CD4-positive, alpha-beta T cell (primary cell): ENCODE measurements at regions of chr1 and their contacts with region 1.

Region 1: GRCh38 chr1:84143796-84144565 is at the start of gene PRKACB:
- DNase-seq: peak in 5 of 14 experiments; percentile 7 to 81 (median 76)
- ATAC-seq: peak; percentile 87
- H3K4me3 ChIP-seq: peak within 1 kb of the TSS; percentile 57
- H3K4me3 Mint-ChIP-seq: peak within 1 kb of the TSS; percentile 100
- H3K27ac ChIP-seq: peak within 1 kb of the TSS; percentile 49 to 63
- H3K27ac Mint-ChIP-seq: peak within 1 kb of the TSS; percentile 99
- H3K4me1 ChIP-seq: peaks cover 8% of the 10 kb centered on the region
- H3K4me1 Mint-ChIP-seq: peaks cover 63% of the 10 kb centered on the region
- H3K27me3 ChIP-seq: no peaks in the 10 kb centered on the region
- H3K27me3 Mint-ChIP-seq: no peaks in the 10 kb centered on the region
- CTCF ChIP-seq: no peak
- total RNA-seq, gene PRKACB: 49.7 to 52.4 TPM

Region 2: GRCh38 chr1:84077476-84078107 is 66.4 kb before region 1 on chr1:
- CTCF ChIA-PET with region 1: no interaction called
- POLR2A ChIA-PET with region 1: interaction called, 13 read pairs
- intact Hi-C with region 1: no loop called
- DNase-seq: peak; percentile 32 to 86 (median 60)
- ATAC-seq: peak; percentile 88
- H3K4me3 ChIP-seq: peak overlapping the region; percentile 74
- H3K4me3 Mint-ChIP-seq: peak overlapping the region; percentile 92
- H3K27ac ChIP-seq: no peak overlapping the region
- H3K27ac Mint-ChIP-seq: peak overlapping the region; percentile 63
- H3K4me1 ChIP-seq: peaks cover 11% of the 10 kb centered on the region
- H3K4me1 Mint-ChIP-seq: peaks cover 16% of the 10 kb centered on the region
- H3K27me3 ChIP-seq: no peaks in the 10 kb centered on the region
- H3K27me3 Mint-ChIP-seq: no peaks in the 10 kb centered on the region
- CTCF ChIP-seq: no peak

Region 3: DNA sequence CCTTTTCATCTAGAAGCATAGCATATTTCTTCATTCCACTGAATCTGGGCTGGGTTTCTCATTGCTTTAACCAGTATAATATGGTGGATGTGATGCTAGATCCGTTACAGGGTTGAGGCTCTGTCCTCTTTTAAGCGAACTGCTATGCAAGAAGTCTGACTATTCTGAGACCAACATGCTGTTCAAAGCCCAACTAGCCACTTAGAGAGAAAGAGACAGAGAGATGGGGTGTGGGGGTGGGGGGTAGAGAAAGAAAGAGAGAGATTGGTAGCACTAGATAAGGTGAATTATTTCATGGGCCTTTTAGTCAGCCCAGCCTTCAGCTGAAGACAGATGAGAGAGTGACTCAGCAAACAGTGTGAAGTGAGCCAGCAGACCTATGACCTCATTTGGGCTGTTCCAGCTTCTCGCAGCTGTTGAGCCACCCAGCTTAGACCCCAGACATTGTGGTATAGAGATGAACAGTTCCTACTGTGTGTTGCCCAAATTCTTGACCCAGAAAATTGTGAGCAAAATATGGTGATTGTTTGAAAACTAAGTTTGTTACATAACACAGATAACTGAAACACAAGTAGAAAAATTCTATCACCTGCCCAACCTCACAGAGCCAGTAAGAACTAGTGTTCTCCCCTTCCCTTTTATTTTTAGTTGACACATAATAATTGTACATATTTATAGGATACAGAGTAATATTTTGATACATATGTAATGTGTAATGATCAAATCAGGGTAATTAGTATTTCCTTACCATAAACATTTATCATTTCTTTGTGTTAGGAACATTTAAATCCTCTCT is 40.6 kb before region 1 on chr1:
- CTCF ChIA-PET with region 1: no interaction called
- POLR2A ChIA-PET with region 1: no interaction called
- intact Hi-C with region 1: no loop called
- DNase-seq: peak in 2 of 14 experiments; percentile 4 to 20
- ATAC-seq: no peak
- H3K4me3 ChIP-seq: no peak overlapping the region
- H3K4me3 Mint-ChIP-seq: no peak overlapping the region
- H3K27ac ChIP-seq: no peak overlapping the region
- H3K27ac Mint-ChIP-seq: no peak overlapping the region
- H3K4me1 ChIP-seq: no peaks in the 10 kb centered on the region
- H3K4me1 Mint-ChIP-seq: no peaks in the 10 kb centered on the region
- H3K27me3 ChIP-seq: no peaks in the 10 kb centered on the region
- H3K27me3 Mint-ChIP-seq: no peaks in the 10 kb centered on the region
- CTCF ChIP-seq: no peak

Region 4: DNA sequence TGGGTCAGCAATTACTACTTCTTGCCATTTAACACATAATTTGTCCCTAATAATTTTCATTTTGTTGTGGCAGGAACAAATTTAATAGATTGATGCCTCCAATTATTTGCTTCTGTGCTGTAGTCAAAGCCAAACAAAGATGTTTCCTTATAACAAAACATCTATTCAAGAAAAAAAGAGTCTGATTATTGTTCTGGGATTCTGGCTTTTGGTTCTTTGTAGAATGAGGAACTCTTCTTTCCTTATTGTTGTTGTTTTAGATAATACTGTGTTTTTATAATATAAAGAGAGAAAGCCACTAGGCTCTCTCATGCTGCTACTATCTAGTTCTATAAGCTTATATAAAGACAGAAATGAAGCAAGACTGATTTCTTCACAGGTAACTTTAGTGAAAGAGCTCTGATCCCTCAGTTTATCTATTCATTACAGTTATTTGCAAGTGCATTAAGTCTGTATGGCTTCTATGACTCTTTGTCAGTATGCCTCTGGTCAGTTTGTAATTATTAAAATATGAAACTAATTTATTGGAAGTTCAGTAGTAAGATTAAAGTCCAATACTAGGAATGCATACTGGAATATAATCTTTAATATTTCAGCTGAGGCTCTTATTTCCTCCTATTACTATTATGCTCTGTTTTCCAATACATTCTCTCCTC is 37.5 kb after region 1 on chr1:
- CTCF ChIA-PET with region 1: interaction called, 8 read pairs
- POLR2A ChIA-PET with region 1: interaction called, 3 read pairs
- intact Hi-C with region 1: loop called in 1 of 2 experiments (anchors 2 kb)
- DNase-seq: no peak
- ATAC-seq: no peak
- H3K4me3 ChIP-seq: no peak overlapping the region
- H3K4me3 Mint-ChIP-seq: no peak overlapping the region
- H3K27ac ChIP-seq: no peak overlapping the region
- H3K27ac Mint-ChIP-seq: peak overlapping the region; percentile 49
- H3K4me1 ChIP-seq: no peaks in the 10 kb centered on the region
- H3K4me1 Mint-ChIP-seq: peaks cover 40% of the 10 kb centered on the region
- H3K27me3 ChIP-seq: no peaks in the 10 kb centered on the region
- H3K27me3 Mint-ChIP-seq: no peaks in the 10 kb centered on the region
- CTCF ChIP-seq: no peak

Region 5: GRCh38 chr1:84387480-84388163 is 243.6 kb after region 1 on chr1:
- CTCF ChIA-PET with region 1: no interaction called
- POLR2A ChIA-PET with region 1: no interaction called
- intact Hi-C with region 1: loop called (anchors 2 to 5 kb)
- DNase-seq: peak in 1 of 14 experiments; percentile 10
- ATAC-seq: peak; percentile 29
- H3K4me3 ChIP-seq: no peak overlapping the region
- H3K4me3 Mint-ChIP-seq: no peak overlapping the region
- H3K27ac ChIP-seq: no peak overlapping the region
- H3K27ac Mint-ChIP-seq: no peak overlapping the region
- H3K4me1 ChIP-seq: no peaks in the 10 kb centered on the region
- H3K4me1 Mint-ChIP-seq: no peaks in the 10 kb centered on the region
- H3K27me3 ChIP-seq: no peaks in the 10 kb centered on the region
- H3K27me3 Mint-ChIP-seq: no peaks in the 10 kb centered on the region
- CTCF ChIP-seq: no peak

Region 6: DNA sequence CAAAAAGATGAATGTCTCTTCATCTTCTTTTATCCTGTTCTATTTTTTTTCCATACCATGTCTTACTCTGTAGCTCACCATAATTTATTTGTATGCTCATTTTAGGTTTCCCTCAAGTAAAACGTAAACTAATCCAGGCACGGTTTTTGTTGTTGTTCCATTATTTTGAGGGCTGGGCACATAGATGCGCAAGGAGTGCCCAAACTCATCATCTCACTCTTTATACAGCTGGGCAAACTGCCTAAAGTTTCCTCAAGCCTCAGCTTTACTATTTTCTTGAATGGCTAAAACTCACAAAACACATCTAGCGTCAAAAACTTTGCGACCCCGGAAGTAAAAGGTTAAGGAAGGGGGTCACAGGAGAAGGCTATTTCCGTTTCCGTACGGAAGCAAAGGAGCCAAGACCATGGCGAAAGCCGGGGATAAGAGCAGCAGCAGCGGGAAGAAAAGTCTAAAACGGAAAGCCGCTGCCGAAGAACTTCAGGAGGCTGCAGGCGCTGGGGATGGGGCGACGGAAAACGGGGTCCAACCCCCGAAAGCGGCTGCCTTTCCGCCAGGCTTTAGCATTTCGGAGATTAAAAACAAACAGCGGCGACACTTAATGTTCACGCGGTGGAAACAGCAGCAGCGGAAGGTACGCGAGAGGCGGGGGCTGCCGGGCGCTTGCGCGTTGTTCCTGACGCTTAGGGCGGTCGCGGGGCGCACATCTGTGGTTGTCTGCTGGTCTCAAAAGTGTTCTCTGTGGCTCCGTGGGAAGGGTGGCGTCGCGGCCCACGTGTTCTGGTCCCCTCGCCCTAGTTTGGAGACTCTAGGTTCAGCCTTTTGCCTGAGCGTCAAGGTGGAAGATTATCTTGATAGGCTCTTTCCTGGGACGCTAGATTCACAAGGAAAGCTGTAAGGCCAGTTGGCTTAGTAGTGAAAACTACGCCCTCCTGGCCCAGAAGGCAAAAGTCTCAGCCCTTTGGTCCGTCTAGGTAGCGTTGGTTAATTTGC is 335.2 kb after region 1 on chr1 and contains the start of gene RPF1:
- CTCF ChIA-PET with region 1: no interaction called
- POLR2A ChIA-PET with region 1: interaction called, 26 read pairs
- intact Hi-C with region 1: no loop called
- DNase-seq: peak; percentile 58 to 91 (median 74)
- ATAC-seq: peak; percentile 93
- H3K4me3 ChIP-seq: peak within 1 kb of the TSS; percentile 84
- H3K4me3 Mint-ChIP-seq: peak within 1 kb of the TSS; percentile 97
- H3K27ac ChIP-seq: peak within 1 kb of the TSS; percentile 82 to 85
- H3K27ac Mint-ChIP-seq: peak within 1 kb of the TSS; percentile 95
- H3K4me1 ChIP-seq: peaks cover 13% of the 10 kb centered on the region
- H3K4me1 Mint-ChIP-seq: peaks cover 53% of the 10 kb centered on the region
- H3K27me3 ChIP-seq: peaks cover 3 to 12% of the 10 kb centered on the region in 2 experiments
- H3K27me3 Mint-ChIP-seq: peaks cover 33% of the 10 kb centered on the region
- CTCF ChIP-seq: no peak
- total RNA-seq, gene RPF1: 67.6 to 69.4 TPM

Region 7: GRCh38 chr1:84620720-84621313 is 476.8 kb after region 1 on chr1:
- CTCF ChIA-PET with region 1: interaction called, 6 read pairs
- POLR2A ChIA-PET with region 1: interaction called, 11 read pairs
- intact Hi-C with region 1: loop called (anchors 1 kb)
- DNase-seq: peak; percentile 50 to 88 (median 74)
- ATAC-seq: peak; percentile 92
- H3K4me3 ChIP-seq: peak overlapping the region; percentile 64
- H3K4me3 Mint-ChIP-seq: peak overlapping the region; percentile 95
- H3K27ac ChIP-seq: no peak overlapping the region
- H3K27ac Mint-ChIP-seq: no peak overlapping the region
- H3K4me1 ChIP-seq: peaks cover 8% of the 10 kb centered on the region
- H3K4me1 Mint-ChIP-seq: peaks cover 12% of the 10 kb centered on the region
- H3K27me3 ChIP-seq: no peaks in the 10 kb centered on the region
- H3K27me3 Mint-ChIP-seq: no peaks in the 10 kb centered on the region
- CTCF ChIP-seq: peak; percentile 100

Region 8: DNA sequence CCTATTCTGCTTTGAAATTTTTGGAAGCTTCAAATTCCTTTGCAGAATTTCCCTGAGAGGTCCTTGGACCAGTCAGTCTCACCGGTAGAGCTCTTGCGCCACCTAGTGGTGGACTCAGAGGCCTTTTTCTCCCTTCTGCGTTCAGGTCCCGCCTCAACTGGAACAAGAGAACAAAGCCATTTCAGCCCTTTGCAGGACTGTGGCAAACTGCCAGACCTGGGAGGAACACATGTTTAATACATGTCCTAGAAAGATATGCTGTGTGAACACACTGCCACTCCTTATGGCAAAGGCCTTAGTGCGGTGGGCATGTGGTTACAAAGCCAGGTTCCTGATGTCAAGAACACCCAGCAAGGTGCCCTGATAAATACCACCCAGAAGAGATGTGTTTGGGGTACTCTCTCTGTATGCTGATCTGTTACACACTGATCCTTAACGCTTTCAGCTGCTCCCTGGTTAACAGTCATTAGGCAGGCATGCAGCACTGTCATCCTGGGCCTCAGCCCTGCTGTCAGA is 628.5 kb after region 1 on chr1:
- CTCF ChIA-PET with region 1: interaction called, 4 read pairs
- POLR2A ChIA-PET with region 1: interaction called, 5 read pairs
- intact Hi-C with region 1: loop called (anchors 2 to 5 kb)
- DNase-seq: peak; percentile 50 to 86 (median 65)
- ATAC-seq: peak; percentile 73
- H3K4me3 ChIP-seq: no peak overlapping the region
- H3K4me3 Mint-ChIP-seq: no peak overlapping the region
- H3K27ac ChIP-seq: no peak overlapping the region
- H3K27ac Mint-ChIP-seq: no peak overlapping the region
- H3K4me1 ChIP-seq: peaks cover 5% of the 10 kb centered on the region
- H3K4me1 Mint-ChIP-seq: no peaks in the 10 kb centered on the region
- H3K27me3 ChIP-seq: no peaks in the 10 kb centered on the region
- H3K27me3 Mint-ChIP-seq: peaks cover 14% of the 10 kb centered on the region
- CTCF ChIP-seq: peak; percentile 99